ENCODE measurements at regions of chr12 and their contacts with region 1.

Region 1: DNA sequence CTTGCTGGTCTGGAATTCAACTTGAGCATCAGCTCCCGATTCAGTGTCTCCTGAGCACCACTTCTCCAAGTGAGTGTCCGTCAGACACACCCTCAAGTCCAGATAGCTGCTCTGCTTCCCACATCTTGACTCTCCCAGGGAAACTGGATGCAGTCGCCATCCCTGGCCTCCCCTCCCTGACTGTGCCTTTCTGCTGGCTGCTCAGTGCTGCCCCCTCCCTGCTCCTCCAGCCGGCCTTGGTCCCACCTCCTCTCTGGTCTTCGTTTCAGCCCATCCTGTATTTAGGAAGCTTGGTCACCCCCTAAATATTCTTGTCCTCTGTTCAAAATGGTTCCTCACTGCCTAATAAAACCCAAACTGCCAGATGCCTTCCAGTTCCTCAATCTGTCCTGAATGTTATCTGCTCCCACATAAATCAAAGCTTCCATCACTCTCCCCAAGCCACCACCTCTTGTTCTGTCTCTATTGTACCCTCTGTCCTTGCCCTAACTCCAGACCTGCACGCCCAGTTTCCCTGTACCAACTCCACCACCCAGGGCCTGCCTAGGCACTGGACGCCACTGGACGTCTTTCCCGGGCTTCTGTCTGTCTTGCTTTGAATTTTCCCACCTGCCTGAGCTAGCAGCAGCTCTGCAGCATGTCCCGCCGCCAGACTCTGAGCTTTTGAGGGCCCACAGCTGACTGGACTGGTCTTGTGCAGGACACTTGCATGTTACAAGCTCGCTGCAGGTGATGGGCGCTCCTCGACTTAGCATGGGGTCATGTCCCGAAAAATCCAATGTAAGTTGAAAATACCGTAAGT is 33.8 kb downstream of the CCDC92 start:
- DNase-seq: peak in 1 of 2 donors; percentile 36
- ATAC-seq: no peak
- H3K4me3 ChIP-seq: no peak overlapping the region
- H3K4me3 Mint-ChIP-seq: peak overlapping the region; percentile 84
- H3K27ac ChIP-seq: peak overlapping the region; percentile 69
- H3K27ac Mint-ChIP-seq: peak overlapping the region; percentile 95 to 96
- H3K4me1 ChIP-seq: peaks cover 53% of the 10 kb centered on the region
- H3K4me1 Mint-ChIP-seq: peaks cover 53 to 58% of the 10 kb centered on the region in 2 donors
- H3K27me3 ChIP-seq: no peaks in the 10 kb centered on the region
- H3K27me3 Mint-ChIP-seq: no peaks in the 10 kb centered on the region
- CTCF ChIP-seq: peak; percentile 16

Region 2: GRCh38 chr12:123905319-123905925 is 33.5 kb before region 1 on chr12:
- intact Hi-C with region 1: loop called (anchors 1 kb)
- DNase-seq: peak; percentile 44 to 88
- ATAC-seq: peak; percentile 63 to 87 (median 77)
- H3K4me3 ChIP-seq: no peak overlapping the region
- H3K4me3 Mint-ChIP-seq: no peak overlapping the region
- H3K27ac ChIP-seq: no peak overlapping the region
- H3K27ac Mint-ChIP-seq: no peak overlapping the region
- H3K4me1 ChIP-seq: no peaks in the 10 kb centered on the region
- H3K4me1 Mint-ChIP-seq: peaks cover 14 to 24% of the 10 kb centered on the region in 2 donors
- H3K27me3 ChIP-seq: no peaks in the 10 kb centered on the region
- H3K27me3 Mint-ChIP-seq: peaks cover 11% of the 10 kb centered on the region in 2 donors
- CTCF ChIP-seq: peak; percentile 83

Region 3: GRCh38 chr12:123916729-123917128 is 22.2 kb before region 1 on chr12:
- intact Hi-C with region 1: loop called (anchors 2 kb)
- DNase-seq: peak; percentile 35 to 43
- ATAC-seq: peak; percentile 87 to 99 (median 97)
- H3K4me3 ChIP-seq: no peak overlapping the region
- H3K4me3 Mint-ChIP-seq: no peak overlapping the region
- H3K27ac ChIP-seq: no peak overlapping the region
- H3K27ac Mint-ChIP-seq: peak overlapping the region; percentile 52 to 67
- H3K4me1 ChIP-seq: peaks cover 7% of the 10 kb centered on the region
- H3K4me1 Mint-ChIP-seq: peaks cover 10 to 13% of the 10 kb centered on the region in 2 donors
- H3K27me3 ChIP-seq: no peaks in the 10 kb centered on the region
- H3K27me3 Mint-ChIP-seq: peaks cover 0 to 4% of the 10 kb centered on the region in 2 donors
- CTCF ChIP-seq: no peak

Region 4: DNA sequence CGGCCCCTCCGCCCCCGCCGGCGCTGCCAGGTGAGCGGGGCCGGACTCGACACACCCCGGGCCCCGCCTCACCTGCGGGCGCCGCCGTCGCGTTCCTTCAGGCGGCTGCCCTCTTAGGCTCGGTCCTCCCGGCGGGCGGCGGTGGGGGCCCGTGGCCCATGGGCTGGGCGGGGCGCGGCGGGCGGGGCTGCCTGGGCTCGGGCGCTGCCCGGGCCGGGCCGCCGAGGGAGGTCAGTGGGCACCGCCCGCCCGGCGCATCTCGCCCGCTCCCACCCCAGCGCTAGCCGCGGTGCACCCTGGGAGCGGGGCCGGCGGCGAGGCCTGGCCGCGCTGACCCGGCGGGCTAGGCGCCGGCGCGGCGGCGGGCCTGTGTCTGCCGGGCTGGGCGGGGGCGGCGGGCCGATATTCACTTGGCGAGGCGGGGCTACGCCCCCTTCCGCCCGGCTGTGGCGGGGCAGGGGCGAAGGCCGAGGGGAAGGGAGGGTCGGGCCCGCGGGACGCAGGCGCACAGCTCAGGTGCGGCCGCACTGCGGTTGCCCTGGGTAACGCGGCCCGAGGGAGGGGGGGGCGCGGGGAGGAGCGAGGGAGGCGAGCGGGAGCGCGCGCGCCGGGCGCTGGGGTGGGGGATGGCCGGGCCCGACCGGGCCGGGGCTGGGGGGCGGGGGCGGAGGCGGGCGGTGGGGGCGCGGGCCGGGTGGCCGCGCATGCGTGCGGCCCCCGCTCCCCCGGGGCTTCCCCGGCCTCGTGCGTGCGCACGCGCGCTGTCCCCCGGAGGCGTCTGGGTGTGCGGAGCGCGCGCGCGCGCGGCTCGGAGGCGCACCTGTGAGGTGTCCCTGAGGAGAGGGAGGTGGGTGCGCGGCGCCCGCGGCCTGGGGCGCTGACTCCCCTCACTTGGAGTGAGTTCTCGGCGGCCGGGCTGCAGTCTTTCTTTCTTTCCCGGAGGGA is 33.8 kb after region 1 on chr12 and contains the starts of genes CCDC92 and ZNF664:
- intact Hi-C with region 1: loop called (anchors 5 kb)
- DNase-seq: peak; percentile 88 to 98
- ATAC-seq: peak; percentile 76 to 89 (median 83)
- H3K4me3 ChIP-seq: peak within 1 kb of the TSS; percentile 60
- H3K4me3 Mint-ChIP-seq: peak within 1 kb of the TSS; percentile 96
- H3K27ac ChIP-seq: peak within 1 kb of the TSS; percentile 59
- H3K27ac Mint-ChIP-seq: peak within 1 kb of the TSS; percentile 88 to 93
- H3K4me1 ChIP-seq: peaks cover 11% of the 10 kb centered on the region
- H3K4me1 Mint-ChIP-seq: peaks cover 36 to 39% of the 10 kb centered on the region in 2 donors
- H3K27me3 ChIP-seq: no peaks in the 10 kb centered on the region
- H3K27me3 Mint-ChIP-seq: no peaks in the 10 kb centered on the region
- CTCF ChIP-seq: no peak
- total RNA-seq, gene CCDC92: 37.6 to 42.4 (median 39.1) TPM
- total RNA-seq, gene ZNF664: 36.0 to 47.3 (median 46.9) TPM